A549 (cell line): ENCODE measurements at regions of chr10 and their contacts with region 1.

Region 1: DNA sequence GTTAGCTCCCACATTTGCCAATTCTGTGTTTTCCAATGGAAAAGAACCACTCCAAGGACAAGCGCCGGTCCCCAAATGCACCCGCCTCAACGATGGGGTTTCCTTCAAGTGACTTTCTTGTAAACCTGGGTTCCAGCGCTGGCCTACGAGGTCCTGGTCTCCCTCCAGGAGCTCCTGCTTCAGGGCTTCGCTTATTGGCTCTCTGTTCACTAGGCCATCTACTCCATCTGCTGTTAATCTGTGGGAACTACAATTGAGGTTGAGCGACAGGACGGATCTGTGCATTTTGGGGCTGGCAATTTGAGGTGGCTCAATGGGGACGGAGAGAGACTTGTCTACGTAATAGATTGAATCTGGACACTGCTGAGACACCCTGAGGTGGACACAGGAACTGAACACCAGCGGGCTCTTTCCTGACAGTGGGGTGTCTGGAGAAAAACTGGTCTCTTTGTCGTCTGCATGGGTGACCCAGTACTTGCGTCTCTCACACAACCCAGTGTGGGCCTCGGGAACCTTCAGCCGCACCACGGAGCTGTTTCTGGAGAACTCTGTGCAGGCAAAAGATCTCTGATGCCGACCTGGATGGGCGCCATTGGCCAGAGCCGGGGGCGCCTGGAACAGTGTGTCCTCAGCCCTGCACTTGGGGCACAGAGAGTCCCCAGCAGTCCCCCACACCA is 115.9 kb upstream of the ADAM12 start:
- DNase-seq: peak; percentile 66 to 74
- ATAC-seq: peak; percentile 88 to 96
- H3K4me3 ChIP-seq: no peak overlapping the region
- H3K27ac ChIP-seq: peak overlapping the region in 1 of 2 experiments; percentile 65; a peak in 3 of 6 replicates
- H3K4me1 ChIP-seq: no peaks in the 10 kb centered on the region; the same call in 2 of the 3 replicates
- CTCF ChIP-seq: peak; percentile 76
- EP300 ChIP-seq: no peak
- POLR2A ChIP-seq: no peak
- RAD21 ChIP-seq: peak; percentile 92 to 93

Region 2: GRCh38 chr10:125868372-125868975 is 635.7 kb before region 1 on chr10:
- CTCF ChIA-PET with region 1: interaction called, 11 read pairs
- POLR2A ChIA-PET with region 1: no interaction called
- DNase-seq: peak; percentile 28 to 74
- ATAC-seq: peak; percentile 73 to 87; a peak in 4 of 6 replicates
- H3K4me3 ChIP-seq: no peak overlapping the region
- H3K27ac ChIP-seq: no peak overlapping the region
- H3K4me1 ChIP-seq: 0 out of 3 replicates have a peak, but pooled peaks cover 4% of the 10 kb centered on the region
- CTCF ChIP-seq: peak; percentile 88
- EP300 ChIP-seq: no peak
- POLR2A ChIP-seq: no peak
- RAD21 ChIP-seq: peak; percentile 89 to 90

Region 3: DNA sequence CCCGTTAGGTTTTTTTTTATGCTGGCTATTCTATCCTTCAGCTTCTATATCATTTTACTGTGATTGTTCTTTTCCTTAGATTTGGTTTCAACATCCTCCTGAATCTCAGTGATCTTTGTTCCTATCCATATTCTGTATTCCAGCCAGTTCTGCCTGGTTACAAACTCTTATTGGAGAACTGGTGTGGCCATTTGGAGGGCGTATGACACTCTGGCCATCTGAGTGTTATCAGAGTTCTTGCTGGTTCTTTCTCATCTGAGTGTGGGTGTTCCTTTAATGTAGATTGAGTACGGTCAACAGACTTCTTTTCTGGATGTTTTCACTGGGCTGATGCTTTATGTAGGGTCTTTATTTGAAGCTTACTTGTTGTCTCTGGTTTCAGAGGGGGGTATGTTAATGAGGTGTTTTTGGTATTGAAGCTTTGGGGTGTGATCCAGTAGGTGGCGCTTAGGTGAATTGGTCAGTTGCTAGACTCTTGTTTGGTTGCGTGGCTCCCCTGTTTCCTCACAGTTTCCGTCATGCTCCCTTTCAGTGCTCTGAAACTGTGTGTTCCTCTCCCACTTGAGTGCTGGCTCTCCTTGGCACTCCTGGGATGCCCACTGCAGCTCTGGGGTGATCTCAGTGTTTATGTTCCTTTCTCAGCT is 527.1 kb before region 1 on chr10:
- CTCF ChIA-PET with region 1: interaction called, 58 read pairs
- POLR2A ChIA-PET with region 1: no interaction called
- DNase-seq: no peak
- ATAC-seq: no peak
- H3K4me3 ChIP-seq: no peak overlapping the region
- H3K27ac ChIP-seq: peak overlapping the region in 1 of 2 experiments; percentile 24; a peak in 2 of 6 replicates
- H3K4me1 ChIP-seq: peaks cover 18% of the 10 kb centered on the region
- CTCF ChIP-seq: no peak
- EP300 ChIP-seq: no peak
- POLR2A ChIP-seq: no peak
- RAD21 ChIP-seq: no peak

Region 4: GRCh38 chr10:125982260-125982948 is 521.8 kb before region 1 on chr10:
- CTCF ChIA-PET with region 1: interaction called, 58 read pairs
- POLR2A ChIA-PET with region 1: no interaction called
- DNase-seq: peak; percentile 35 to 69
- ATAC-seq: peak; percentile 78 to 87; a peak in 5 of 6 replicates
- H3K4me3 ChIP-seq: no peak overlapping the region
- H3K27ac ChIP-seq: peak overlapping the region; percentile 23 to 67; a peak in 4 of 6 replicates
- H3K4me1 ChIP-seq: peaks cover 27% of the 10 kb centered on the region; the same call in 2 of the 3 replicates
- CTCF ChIP-seq: peak; percentile 82
- EP300 ChIP-seq: no peak
- POLR2A ChIP-seq: no peak
- RAD21 ChIP-seq: peak; percentile 87 to 94

Region 5: GRCh38 chr10:126387023-126387921 is 116.9 kb before region 1 on chr10:
- CTCF ChIA-PET with region 1: interaction called, 19 read pairs
- POLR2A ChIA-PET with region 1: interaction called, 3 read pairs
- DNase-seq: peak; percentile 66 to 70
- ATAC-seq: peak; percentile 85 to 90
- H3K4me3 ChIP-seq: peak overlapping the region; percentile 61
- H3K27ac ChIP-seq: peak overlapping the region; percentile 63 to 93
- H3K4me1 ChIP-seq: no peaks in the 10 kb centered on the region
- CTCF ChIP-seq: peak; percentile 70
- EP300 ChIP-seq: no peak
- POLR2A ChIP-seq: no peak
- RAD21 ChIP-seq: peak; percentile 84 to 94

Region 6: DNA sequence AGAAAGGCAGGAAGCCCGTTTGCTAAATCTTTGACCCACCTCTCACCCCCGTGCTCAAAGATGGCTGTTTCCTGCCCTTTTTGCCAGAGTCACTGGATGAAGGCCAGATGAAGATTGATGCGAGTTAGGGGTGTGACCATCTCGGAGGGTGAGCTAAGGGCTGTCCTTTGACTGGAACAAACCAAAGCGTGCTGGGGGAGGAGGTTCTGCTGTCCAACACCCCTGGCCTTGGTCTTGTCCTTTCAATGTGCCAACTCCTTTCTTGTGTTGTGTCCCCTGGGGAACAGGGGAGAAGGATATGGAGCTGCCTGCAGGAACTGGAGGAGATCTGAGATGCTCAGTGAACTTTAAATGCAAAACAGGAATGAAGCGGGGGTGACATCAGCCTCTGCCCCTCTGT is 25.7 kb before region 1 on chr10:
- CTCF ChIA-PET with region 1: interaction called, 11 read pairs
- POLR2A ChIA-PET with region 1: no interaction called
- DNase-seq: no peak
- ATAC-seq: no peak
- H3K4me3 ChIP-seq: no peak overlapping the region
- H3K27ac ChIP-seq: no peak overlapping the region
- H3K4me1 ChIP-seq: no peaks in the 10 kb centered on the region
- CTCF ChIP-seq: no peak
- EP300 ChIP-seq: no peak
- POLR2A ChIP-seq: no peak
- RAD21 ChIP-seq: no peak

Region 7: GRCh38 chr10:126806498-126806897 is 302.3 kb after region 1 on chr10:
- CTCF ChIA-PET with region 1: no interaction called
- POLR2A ChIA-PET with region 1: no interaction called
- DNase-seq: no peak
- ATAC-seq: no peak
- H3K4me3 ChIP-seq: no peak overlapping the region
- H3K27ac ChIP-seq: no peak overlapping the region
- H3K4me1 ChIP-seq: no peaks in the 10 kb centered on the region
- CTCF ChIP-seq: no peak
- EP300 ChIP-seq: no peak
- POLR2A ChIP-seq: no peak
- RAD21 ChIP-seq: no peak